ENCODE measurements at regions of chr1 and their contacts with region 1.

Region 1: DNA sequence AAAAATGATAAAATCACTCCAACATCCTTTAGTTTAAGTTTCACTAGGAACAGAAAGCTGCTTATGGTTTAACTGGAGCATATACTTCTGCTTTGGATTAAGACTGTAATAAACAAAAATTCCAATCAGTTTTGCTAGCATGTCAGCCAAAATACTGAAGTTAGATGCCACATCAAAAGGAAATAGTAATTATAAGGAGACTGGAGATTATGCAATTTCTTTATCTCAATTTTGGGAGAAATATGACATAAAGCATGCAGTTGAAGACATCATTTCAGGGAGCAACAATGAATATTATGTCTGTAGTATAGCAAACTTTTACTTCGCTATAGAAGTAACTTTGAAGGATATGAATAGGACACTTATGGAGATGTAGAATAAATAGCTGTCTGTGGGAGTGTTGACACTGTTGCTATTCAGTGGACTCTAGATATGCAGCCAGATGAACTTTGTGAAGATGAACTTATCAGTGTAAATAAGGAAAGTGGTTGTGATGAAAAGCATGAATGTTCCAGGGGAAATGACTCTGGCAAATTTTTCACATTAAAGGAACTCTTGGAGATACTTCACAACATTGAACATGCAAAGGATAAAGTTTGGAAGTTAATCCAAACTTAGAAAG is 107.8 kb downstream of the RABGAP1L start:
- DNase-seq: peak in 2 of 4 donors; percentile 18 to 47
- ATAC-seq: no peak
- H3K4me3 ChIP-seq: no peak overlapping the region
- H3K27ac ChIP-seq: no peak overlapping the region
- H3K4me1 ChIP-seq: peaks cover 0 to 4% of the 10 kb centered on the region in 2 donors
- H3K27me3 ChIP-seq: no peaks in the 10 kb centered on the region
- CTCF ChIP-seq: no peak

Region 2: DNA sequence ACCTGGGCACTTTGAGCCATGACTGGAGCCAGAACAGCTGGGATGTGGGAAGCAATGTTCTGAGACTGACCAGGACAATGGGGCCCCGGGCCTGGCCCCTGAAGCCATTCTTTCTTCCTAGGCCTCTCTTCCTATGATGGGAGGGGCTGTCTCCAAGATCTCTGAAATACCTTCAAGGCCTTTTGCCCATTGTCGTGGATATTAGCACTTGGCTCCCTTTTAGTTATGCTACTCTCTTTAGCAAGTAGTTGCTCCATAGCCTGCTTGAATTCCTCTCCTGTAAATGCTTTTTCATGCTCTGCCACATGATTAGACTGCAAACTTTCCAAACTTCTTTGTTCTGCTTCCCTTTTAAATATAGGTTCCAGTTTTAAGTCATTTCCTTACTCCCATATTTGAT is 469.7 kb after region 1 on chr1:
- intact Hi-C with region 1: loop called in 1 of 2 experiments (anchors 5 kb)
- DNase-seq: no peak
- ATAC-seq: no peak
- H3K4me3 ChIP-seq: no peak overlapping the region
- H3K27ac ChIP-seq: no peak overlapping the region
- H3K4me1 ChIP-seq: peaks cover 0 to 21% of the 10 kb centered on the region in 2 donors
- H3K27me3 ChIP-seq: no peaks in the 10 kb centered on the region
- CTCF ChIP-seq: no peak

Measured in left lung (tissue), 14 donors.